ENCODE measurements at regions of chr7 and their contacts with region 1.

Region 1: DNA sequence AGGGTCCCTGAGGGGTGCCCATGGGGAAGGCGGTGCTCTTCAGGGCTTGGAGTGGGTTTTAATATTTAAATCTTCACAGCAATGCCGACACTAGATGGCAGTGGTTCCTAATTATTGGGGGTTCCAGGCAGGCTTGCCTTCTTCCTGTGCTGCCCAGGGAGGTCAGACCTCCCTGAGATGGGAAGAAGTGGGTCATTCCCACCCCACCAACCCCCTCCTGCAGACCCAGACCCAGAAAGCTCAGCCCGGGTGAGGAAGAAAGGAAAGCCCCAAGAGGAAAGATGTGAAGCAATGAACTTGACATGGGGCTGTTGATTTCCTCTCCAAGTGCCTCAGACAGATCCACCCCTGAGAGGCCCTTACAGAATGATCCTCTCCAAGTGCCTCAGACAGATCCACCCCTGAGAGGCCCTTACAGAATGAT is 85.1 kb upstream of the LANCL2 start:
- DNase-seq: peak in 2 of 3 donors; percentile 35 to 90
- ATAC-seq: peak; percentile 76
- H3K4me3 ChIP-seq: no peak overlapping the region
- H3K4me1 ChIP-seq: no peaks in the 10 kb centered on the region
- CTCF ChIP-seq: peak; percentile 28

Region 2: DNA sequence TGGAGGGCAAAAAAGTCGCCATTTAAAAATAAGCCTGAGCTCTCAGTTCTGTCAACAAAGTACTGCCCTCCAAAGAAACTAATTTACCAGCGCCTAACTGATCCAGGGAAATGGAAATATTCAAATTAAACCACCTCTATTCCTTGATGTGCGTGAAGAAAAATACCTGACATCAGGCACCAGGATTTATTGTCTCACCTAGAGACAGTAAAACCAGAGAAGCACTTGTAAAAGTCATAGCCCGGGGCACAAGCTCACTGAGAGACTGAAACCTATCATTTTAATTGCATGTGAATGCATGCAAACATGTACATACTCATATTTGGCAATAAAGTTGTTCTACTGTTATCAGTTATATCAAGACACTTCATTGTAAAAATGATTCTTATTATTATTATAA is 885.2 kb before region 1 on chr7:
- intact Hi-C with region 1: no loop called
- DNase-seq: no peak
- ATAC-seq: no peak
- H3K4me3 ChIP-seq: no peak overlapping the region
- H3K4me1 ChIP-seq: no peaks in the 10 kb centered on the region
- CTCF ChIP-seq: no peak

Region 3: GRCh38 chr7:54904130-54904529 is 375.9 kb before region 1 on chr7:
- intact Hi-C with region 1: no loop called
- DNase-seq: no peak
- ATAC-seq: peak; percentile 18
- H3K4me3 ChIP-seq: no peak overlapping the region
- H3K4me1 ChIP-seq: no peaks in the 10 kb centered on the region
- CTCF ChIP-seq: no peak

Region 4: GRCh38 chr7:55409482-55410225 is 129.6 kb after region 1 on chr7:
- intact Hi-C with region 1: loop called in 1 of 2 experiments (anchors 5 kb)
- DNase-seq: peak in 1 of 3 donors; percentile 60
- ATAC-seq: peak; percentile 70
- H3K4me3 ChIP-seq: no peak overlapping the region
- H3K4me1 ChIP-seq: peaks cover 7% of the 10 kb centered on the region
- CTCF ChIP-seq: no peak

Region 5: GRCh38 chr7:55415173-55415778 is 135.2 kb after region 1 on chr7:
- intact Hi-C with region 1: loop called (anchors 5 kb)
- DNase-seq: peak in 2 of 3 donors; percentile 76 to 95
- ATAC-seq: peak; percentile 95
- H3K4me3 ChIP-seq: no peak overlapping the region
- H3K4me1 ChIP-seq: no peaks in the 10 kb centered on the region
- CTCF ChIP-seq: peak; percentile 48

Measured in mucosa of descending colon (tissue), 3 donors.